Activated CD8-positive, alpha-beta memory T cell treated with anti-CD3 and anti-CD28 coated beads, Interleukin-2, amount 10 ng/mL, durations not matched to agents 7 days and 5 days (primary cell): ENCODE measurements at regions of chr2 and their contacts with region 1.

Region 1: GRCh38 chr2:97728091-97728731 is 14.8 kb downstream of the ZAP70 start:
- DNase-seq: no peak
- ATAC-seq: peak; percentile 49
- H3K4me3 Mint-ChIP-seq: no peak overlapping the region
- H3K27ac Mint-ChIP-seq: peak overlapping the region; percentile 68
- H3K4me1 Mint-ChIP-seq: peaks cover 61% of the 10 kb centered on the region
- H3K27me3 Mint-ChIP-seq: no peaks in the 10 kb centered on the region

Region 2: DNA sequence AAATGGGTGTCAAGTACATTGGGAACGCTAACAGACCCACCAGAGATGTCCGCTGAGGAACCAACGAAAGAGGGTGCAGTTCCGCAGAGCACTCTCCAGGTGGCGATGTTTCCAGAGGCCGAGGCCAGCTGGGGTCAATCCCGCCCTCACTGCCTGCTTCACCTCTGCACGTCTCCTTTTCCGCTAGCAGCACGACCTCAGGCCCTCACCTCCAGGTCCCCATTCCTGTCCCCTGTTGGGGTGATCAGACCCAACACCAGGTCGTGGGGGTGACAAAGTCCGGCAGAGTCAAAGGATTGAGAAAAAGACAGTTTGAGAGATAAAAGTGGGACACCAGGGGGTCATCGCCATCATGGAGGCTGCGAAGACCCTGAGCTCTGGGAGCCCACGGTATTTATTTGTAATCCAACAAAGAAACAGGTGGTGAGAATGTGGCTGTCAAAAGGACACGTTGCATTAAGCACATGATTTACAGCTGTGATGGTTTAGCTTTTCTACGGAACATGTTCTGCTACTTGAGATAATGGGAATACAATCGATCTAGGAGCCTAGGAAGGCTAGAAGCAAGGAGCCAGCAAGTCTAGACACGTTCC is 12.5 kb after region 1 on chr2:
- CTCF ChIA-PET with region 1: interaction called, 58 read pairs
- DNase-seq: peak; percentile 57
- ATAC-seq: no peak
- H3K4me3 Mint-ChIP-seq: no peak overlapping the region
- H3K27ac Mint-ChIP-seq: peak overlapping the region; percentile 97
- H3K4me1 Mint-ChIP-seq: peaks cover 56% of the 10 kb centered on the region
- H3K27me3 Mint-ChIP-seq: no peaks in the 10 kb centered on the region